WTC11 (cell line): ENCODE measurements at regions of chr16 and their contacts with region 1.

Region 1: GRCh38 chr16:75519881-75520280 is 16.0 kb downstream of the CHST5 start:
- DNase-seq: no peak
- ATAC-seq: no peak
- H3K4me3 Mint-ChIP-seq: no peak overlapping the region
- H3K27ac Mint-ChIP-seq: no peak overlapping the region
- H3K4me1 Mint-ChIP-seq: peaks cover 14% of the 10 kb centered on the region
- H3K27me3 Mint-ChIP-seq: no peaks in the 10 kb centered on the region
- CTCF ChIP-seq: no peak

Region 2: DNA sequence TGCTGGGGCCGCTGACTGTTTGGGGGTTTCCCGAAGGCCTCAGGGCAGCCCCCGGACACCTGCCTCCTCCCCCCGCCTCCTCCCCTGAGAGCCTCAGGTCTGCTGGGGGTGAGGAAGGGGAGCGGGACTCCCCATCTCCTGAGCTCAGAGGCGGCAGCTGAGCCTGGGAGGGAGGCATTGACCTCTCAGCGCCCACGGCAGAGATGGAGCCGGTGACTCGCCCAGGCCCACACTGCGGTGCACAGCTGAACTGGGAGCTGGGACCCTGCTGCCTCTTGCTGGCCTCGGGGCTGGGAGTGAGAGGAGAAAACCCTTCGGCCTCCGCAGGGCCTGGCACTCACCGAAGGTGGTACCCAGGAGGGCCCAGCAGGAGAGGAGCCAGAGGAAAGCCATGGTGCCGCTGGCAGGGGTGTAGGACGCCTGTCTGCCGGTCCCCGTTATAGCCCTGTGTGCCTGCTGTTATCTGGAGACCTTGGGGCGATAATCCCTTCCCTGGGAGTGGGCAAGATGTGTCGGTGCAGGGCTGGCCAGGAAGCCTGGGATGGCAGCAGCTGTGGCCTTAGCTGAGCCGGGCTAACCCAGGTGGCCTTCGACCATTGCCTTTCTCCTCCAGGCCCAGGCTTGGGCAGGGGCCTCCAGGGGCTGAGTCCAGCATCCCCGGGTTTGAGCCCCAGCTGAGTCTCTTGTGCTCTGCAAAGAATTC is 313.0 kb before region 1 on chr16 and contains the start of gene CTRB2:
- CTCF ChIA-PET with region 1: no interaction called
- POLR2A ChIA-PET with region 1: no interaction called
- DNase-seq: no peak
- ATAC-seq: no peak
- H3K4me3 Mint-ChIP-seq: no peak within 1 kb of the TSS
- H3K27ac Mint-ChIP-seq: no peak within 1 kb of the TSS
- H3K4me1 Mint-ChIP-seq: 0 out of 2 replicates have a peak, but pooled peaks cover 6% of the 10 kb centered on the region
- H3K27me3 Mint-ChIP-seq: no peaks in the 10 kb centered on the region
- CTCF ChIP-seq: no peak
- total RNA-seq, gene CTRB2: 5.8 to 11.8 TPM (median 6.8 TPM) in 3 replicates

Region 3: GRCh38 chr16:75288596-75289120 is 231.2 kb before region 1 on chr16:
- CTCF ChIA-PET with region 1: no interaction called
- POLR2A ChIA-PET with region 1: no interaction called
- DNase-seq: no peak
- ATAC-seq: no peak
- H3K4me3 Mint-ChIP-seq: no peak overlapping the region
- H3K27ac Mint-ChIP-seq: peak overlapping the region; percentile 48
- H3K4me1 Mint-ChIP-seq: peaks cover 15% of the 10 kb centered on the region; the same call in 1 of the 2 replicates
- H3K27me3 Mint-ChIP-seq: no peaks in the 10 kb centered on the region
- CTCF ChIP-seq: no peak

Region 4: DNA sequence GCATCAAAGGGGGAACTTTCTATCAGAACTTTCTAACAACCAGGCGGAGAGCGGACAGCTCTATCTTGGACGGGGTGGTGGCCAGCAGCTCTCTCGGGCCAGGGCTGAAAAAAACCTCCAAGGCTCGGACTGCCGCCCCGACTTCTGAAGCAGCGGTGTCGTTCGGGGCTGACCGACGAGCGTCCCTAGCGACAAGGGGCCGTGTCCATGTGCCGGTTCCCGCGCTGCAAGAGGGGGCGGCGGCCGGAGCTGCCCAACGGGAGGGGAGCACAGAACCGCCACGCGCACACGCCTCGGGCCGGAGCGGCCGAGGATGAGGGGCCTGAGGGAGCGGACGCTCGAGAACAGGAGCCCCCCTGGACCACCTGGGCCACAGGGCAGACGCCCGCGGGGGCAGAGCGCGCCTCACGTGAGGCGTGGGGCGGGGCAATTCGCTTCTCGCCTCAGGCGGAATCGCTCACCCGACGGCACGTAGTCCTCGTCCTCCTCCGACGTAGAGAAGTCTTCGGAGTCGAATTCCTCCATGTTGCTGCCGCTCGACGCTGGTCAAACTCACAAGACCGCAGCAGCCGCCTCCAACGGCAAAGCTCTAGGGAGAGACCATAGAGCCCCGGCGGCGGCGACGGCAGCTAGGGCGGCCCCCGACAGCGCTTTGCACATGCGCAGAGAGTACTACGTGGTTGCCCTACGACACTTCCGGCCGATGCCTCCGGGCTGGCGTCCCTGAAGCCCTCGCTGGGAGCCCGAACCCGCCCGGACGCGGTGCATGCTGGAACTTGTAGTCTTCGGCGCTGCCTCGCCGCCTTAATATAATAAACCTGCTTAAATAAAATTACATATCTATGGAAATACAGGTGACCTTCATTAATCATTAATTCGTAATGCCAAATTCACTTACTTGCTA is 86.8 kb before region 1 on chr16 and contains the start of gene CFDP1:
- CTCF ChIA-PET with region 1: interaction called, 20 read pairs
- POLR2A ChIA-PET with region 1: interaction called, 9 read pairs
- DNase-seq: peak; percentile 97
- ATAC-seq: peak; percentile 87
- H3K4me3 Mint-ChIP-seq: peak within 1 kb of the TSS; percentile 79
- H3K27ac Mint-ChIP-seq: peak within 1 kb of the TSS; percentile 97
- H3K4me1 Mint-ChIP-seq: peaks cover 22% of the 10 kb centered on the region
- H3K27me3 Mint-ChIP-seq: peaks cover 8% of the 10 kb centered on the region
- CTCF ChIP-seq: no peak
- total RNA-seq, gene CFDP1: 79.2 to 102 TPM (median 98.0 TPM) in 3 replicates

Region 5: DNA sequence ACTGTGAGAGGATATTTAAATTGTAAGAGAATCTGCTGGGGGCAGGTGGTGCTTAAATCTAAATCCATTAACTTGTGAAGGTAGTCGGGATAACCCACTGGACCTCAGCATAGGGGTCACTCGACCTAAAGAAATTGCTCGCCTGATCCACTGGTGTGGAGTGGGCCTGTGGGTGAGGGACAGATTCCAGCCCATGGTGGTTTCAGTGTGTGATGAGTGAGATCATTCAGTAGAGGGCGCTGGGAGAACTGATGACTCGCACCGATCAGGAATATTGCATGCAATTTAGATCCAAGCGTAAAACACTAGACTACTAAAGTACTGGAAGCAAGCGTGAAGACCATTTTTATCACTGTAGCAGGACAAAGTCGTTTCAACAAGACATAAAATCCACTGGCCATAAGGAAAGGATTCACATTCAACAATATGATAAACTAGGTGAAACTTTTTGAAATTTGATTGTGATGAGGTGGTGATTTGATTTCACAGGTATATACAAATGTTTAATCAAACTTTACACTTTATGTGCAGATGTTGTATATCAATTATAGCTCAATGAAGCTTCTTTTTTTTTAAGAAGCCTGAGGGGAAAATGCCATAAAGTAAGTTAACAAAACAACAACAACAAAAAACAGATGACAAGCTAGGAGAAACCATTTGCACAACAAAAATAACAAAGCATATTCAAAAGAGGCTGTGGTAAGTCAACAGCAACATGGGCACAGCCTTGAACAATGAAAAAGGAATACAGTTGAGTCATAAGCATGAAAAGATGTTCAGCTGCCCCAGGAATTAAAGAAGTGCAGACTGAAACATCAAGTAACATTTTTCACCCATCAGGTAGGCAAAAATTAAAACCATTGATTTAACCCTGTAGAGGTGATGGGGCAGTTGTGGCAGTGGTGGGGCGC is 47.9 kb before region 1 on chr16:
- CTCF ChIA-PET with region 1: interaction called, 55 read pairs
- POLR2A ChIA-PET with region 1: interaction called, 4 read pairs
- DNase-seq: peak; percentile 48
- ATAC-seq: peak; percentile 84
- H3K4me3 Mint-ChIP-seq: peak overlapping the region; percentile 37
- H3K27ac Mint-ChIP-seq: peak overlapping the region; percentile 84
- H3K4me1 Mint-ChIP-seq: peaks cover 23% of the 10 kb centered on the region
- H3K27me3 Mint-ChIP-seq: no peaks in the 10 kb centered on the region
- CTCF ChIP-seq: peak; percentile 50; the same call in 1 of the 2 replicates

Region 6: GRCh38 chr16:75495076-75495674 is 24.7 kb before region 1 on chr16 and contains the start of gene CHST6:
- CTCF ChIA-PET with region 1: interaction called, 91 read pairs
- POLR2A ChIA-PET with region 1: interaction called, 24 read pairs
- DNase-seq: peak; percentile 82
- ATAC-seq: peak; percentile 85
- H3K4me3 Mint-ChIP-seq: peak within 1 kb of the TSS; percentile 93
- H3K27ac Mint-ChIP-seq: 0 out of 2 replicates have a peak within 1 kb of the TSS, but pooled peaks have one; percentile 76
- H3K4me1 Mint-ChIP-seq: peaks cover 19% of the 10 kb centered on the region
- H3K27me3 Mint-ChIP-seq: peaks cover 13% of the 10 kb centered on the region
- CTCF ChIP-seq: no peak
- total RNA-seq, gene CHST6: 20.2 to 23.2 TPM (median 23.1 TPM) in 3 replicates

Region 7: DNA sequence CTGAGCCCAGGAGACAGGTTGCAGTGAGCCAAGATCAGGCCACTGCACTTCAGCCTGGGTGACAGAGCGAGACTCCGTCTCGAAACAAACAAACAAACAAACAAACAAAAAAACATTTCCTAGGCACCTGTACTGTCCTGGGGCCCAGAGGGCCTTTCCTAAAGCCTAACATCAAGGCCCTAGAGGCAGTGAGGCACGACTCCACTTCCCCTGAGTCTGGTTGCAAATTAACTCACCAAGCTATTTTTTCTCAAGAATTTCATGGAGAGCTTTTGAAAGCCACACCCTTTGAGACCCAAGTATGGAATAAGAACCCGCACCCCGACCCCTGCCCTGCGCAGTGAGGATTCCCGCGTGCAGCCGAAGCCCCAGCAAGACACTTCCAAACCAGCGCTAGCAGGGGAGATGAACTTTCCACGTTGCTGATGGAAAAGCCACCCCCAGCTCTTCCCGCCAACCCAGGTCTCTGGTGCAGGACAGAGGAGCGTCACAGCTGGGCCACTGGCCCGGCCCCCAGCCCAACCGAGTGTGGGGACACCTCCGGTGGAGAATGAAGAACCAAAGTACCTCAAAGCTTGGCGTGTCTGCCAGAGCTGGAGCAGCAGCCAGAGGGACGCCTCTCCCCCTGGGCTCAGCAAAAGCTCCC is 14.8 kb after region 1 on chr16:
- CTCF ChIA-PET with region 1: interaction called, 34 read pairs
- POLR2A ChIA-PET with region 1: interaction called, 4 read pairs
- DNase-seq: no peak
- ATAC-seq: no peak
- H3K4me3 Mint-ChIP-seq: no peak overlapping the region
- H3K27ac Mint-ChIP-seq: no peak overlapping the region
- H3K4me1 Mint-ChIP-seq: no peaks in the 10 kb centered on the region
- H3K27me3 Mint-ChIP-seq: no peaks in the 10 kb centered on the region
- CTCF ChIP-seq: no peak

Region 8: GRCh38 chr16:75566040-75566810 is 46.3 kb after region 1 on chr16 and contains the start of gene GABARAPL2:
- CTCF ChIA-PET with region 1: interaction called, 17 read pairs
- POLR2A ChIA-PET with region 1: interaction called, 4 read pairs
- DNase-seq: peak; percentile 95
- ATAC-seq: peak; percentile 78
- H3K4me3 Mint-ChIP-seq: peak within 1 kb of the TSS; percentile 100
- H3K27ac Mint-ChIP-seq: peak within 1 kb of the TSS; percentile 97
- H3K4me1 Mint-ChIP-seq: peaks cover 35% of the 10 kb centered on the region
- H3K27me3 Mint-ChIP-seq: no peaks in the 10 kb centered on the region
- CTCF ChIP-seq: no peak
- total RNA-seq, gene GABARAPL2: 60.8 to 63.7 TPM (median 62.7 TPM) in 3 replicates

Region 9: GRCh38 chr16:75695704-75696103 is 175.8 kb after region 1 on chr16:
- CTCF ChIA-PET with region 1: no interaction called
- POLR2A ChIA-PET with region 1: no interaction called
- DNase-seq: no peak
- ATAC-seq: peak; percentile 58
- H3K4me3 Mint-ChIP-seq: no peak overlapping the region
- H3K27ac Mint-ChIP-seq: no peak overlapping the region
- H3K4me1 Mint-ChIP-seq: no peaks in the 10 kb centered on the region
- H3K27me3 Mint-ChIP-seq: peaks cover 2% of the 10 kb centered on the region; the same call in 1 of the 2 replicates
- CTCF ChIP-seq: peak; percentile 28; the same call in 1 of the 2 replicates